Activated naive CD4-positive, alpha-beta T cell treated with anti-CD3 and anti-CD28 coated beads for 36 hours (primary cell): ENCODE measurements at regions of chr19 and their contacts with region 1.

Region 1: GRCh38 chr19:51158474-51159129 is 16.5 kb downstream of the SIGLEC7 start:
- DNase-seq: peak; percentile 91
- H3K4me3 Mint-ChIP-seq: no peak overlapping the region
- H3K27ac Mint-ChIP-seq: no peak overlapping the region
- H3K4me1 Mint-ChIP-seq: peaks cover 6% of the 10 kb centered on the region
- H3K27me3 Mint-ChIP-seq: no peaks in the 10 kb centered on the region

Region 2: DNA sequence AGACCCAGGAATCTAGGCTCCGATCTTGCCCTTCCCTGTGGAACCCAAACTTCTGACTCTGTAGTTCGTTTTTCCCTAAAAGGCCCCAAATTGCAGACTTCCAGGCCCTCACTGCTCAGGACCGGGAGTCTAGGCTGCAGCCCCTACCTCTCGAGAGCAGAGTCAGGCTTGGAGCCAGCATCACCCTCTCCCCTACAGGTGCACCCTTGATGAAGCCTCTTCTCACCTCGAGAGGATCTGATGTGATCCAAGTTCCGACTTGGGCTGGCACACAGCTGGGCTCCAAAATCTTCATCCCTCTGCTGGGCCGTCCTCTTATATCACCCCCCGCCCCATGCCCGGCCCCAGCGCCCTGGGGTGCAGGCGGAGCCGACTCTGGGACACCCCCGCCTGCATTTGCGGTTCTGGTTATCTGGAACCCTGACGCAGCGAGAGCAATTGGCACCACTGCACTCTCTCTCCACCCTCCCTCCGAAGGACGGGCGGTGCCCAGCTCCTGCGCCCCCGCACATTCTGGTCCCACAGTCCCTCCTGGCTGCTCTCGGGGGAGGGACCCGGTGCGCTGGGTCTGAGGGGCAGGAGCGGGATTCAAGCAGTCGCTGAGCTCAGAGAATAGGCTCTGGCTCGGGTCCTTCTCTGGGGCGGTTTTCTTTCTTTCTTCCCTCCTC is 174.8 kb before region 1 on chr19 and contains the start of gene KLK7:
- CTCF ChIA-PET with region 1: no interaction called
- intact Hi-C with region 1: no loop called
- DNase-seq: no peak
- H3K4me3 Mint-ChIP-seq: no peak within 1 kb of the TSS
- H3K27ac Mint-ChIP-seq: no peak within 1 kb of the TSS
- H3K4me1 Mint-ChIP-seq: no peaks in the 10 kb centered on the region
- H3K27me3 Mint-ChIP-seq: peaks cover 40% of the 10 kb centered on the region
- total RNA-seq, gene KLK7: not detected

Region 3: DNA sequence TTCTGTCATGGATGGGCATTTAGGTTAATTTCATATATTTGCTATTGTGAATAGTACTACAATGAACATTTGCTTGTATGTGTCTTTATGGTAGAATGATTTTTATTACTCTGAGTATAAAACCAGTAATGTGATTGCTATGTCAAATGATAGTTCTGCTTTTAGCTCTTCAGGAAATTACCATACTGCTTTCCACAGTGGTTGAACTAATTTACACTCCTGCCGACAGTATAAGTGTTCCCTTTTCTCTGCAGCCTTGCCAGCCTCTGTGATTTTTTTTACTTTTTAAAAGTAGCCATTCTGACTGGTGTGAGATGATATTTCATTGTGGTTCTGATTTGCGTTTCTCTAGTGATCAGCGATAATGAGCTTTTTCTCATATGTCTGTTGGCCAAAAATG is 10.0 kb before region 1 on chr19:
- CTCF ChIA-PET with region 1: interaction called, 11 read pairs
- intact Hi-C with region 1: no loop called
- DNase-seq: no peak
- H3K4me3 Mint-ChIP-seq: no peak overlapping the region
- H3K27ac Mint-ChIP-seq: no peak overlapping the region
- H3K4me1 Mint-ChIP-seq: peaks cover 3% of the 10 kb centered on the region
- H3K27me3 Mint-ChIP-seq: no peaks in the 10 kb centered on the region

Region 4: GRCh38 chr19:51259348-51260245 is 101.0 kb after region 1 on chr19:
- CTCF ChIA-PET with region 1: interaction called, 20 read pairs
- intact Hi-C with region 1: loop called (anchors 1 kb)
- DNase-seq: peak; percentile 65
- H3K4me3 Mint-ChIP-seq: no peak overlapping the region
- H3K27ac Mint-ChIP-seq: no peak overlapping the region
- H3K4me1 Mint-ChIP-seq: no peaks in the 10 kb centered on the region
- H3K27me3 Mint-ChIP-seq: peaks cover 26% of the 10 kb centered on the region

Region 5: GRCh38 chr19:51375504-51376221 is 217.1 kb after region 1 on chr19:
- CTCF ChIA-PET with region 1: no interaction called
- intact Hi-C with region 1: no loop called
- DNase-seq: peak; percentile 78
- H3K4me3 Mint-ChIP-seq: peak overlapping the region; percentile 24
- H3K27ac Mint-ChIP-seq: peak overlapping the region; percentile 46
- H3K4me1 Mint-ChIP-seq: peaks cover 65% of the 10 kb centered on the region
- H3K27me3 Mint-ChIP-seq: no peaks in the 10 kb centered on the region

Region 6: DNA sequence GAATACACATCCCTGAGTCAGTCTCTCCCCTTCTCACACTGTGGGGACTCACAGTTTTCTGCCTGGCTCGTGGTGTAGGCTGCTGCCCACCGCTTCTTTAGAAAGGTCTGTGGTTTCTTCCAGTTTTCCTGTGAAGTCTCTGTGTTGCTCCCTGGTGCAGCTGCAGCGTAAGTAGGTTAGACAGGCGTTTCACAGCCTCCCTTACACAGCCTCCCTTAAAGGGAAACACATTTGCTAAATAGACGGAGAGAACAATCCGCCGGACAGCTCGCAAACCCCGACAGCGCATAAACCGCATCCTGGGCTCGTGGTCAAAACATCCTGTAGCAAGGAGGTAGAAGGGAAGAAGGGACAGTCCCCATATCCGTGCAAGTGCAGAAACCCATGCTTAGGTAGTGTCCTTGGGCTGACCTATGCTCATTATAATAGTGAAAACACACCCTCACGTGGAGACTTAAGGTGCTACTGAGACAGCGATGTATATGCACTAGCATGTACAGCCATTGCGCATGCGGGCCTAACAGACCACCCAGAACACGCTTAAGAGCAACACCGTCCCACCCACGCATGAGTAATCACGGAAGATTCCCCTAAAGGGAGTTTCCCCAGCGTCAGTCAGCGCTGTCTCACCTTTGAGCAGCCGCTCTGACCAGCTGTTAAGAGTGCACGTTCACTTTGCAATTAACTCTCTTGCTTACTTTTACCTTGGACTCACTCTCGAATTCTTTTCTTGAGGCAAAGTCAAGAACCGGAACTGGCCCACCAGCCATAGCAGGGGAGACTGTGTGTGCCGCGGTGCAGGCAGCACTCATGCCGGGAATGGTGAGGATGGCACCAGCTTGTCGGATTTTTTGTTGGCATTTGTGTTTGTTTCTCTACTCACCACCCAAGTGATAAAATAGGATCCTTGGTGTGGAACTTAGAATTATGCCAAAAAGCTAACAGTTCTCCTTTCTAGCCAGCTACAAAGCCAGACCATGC is 283.1 kb after region 1 on chr19:
- CTCF ChIA-PET with region 1: no interaction called
- intact Hi-C with region 1: loop called (anchors 10 kb)
- DNase-seq: peak; percentile 95
- H3K4me3 Mint-ChIP-seq: peak overlapping the region; percentile 62
- H3K27ac Mint-ChIP-seq: peak overlapping the region; percentile 87
- H3K4me1 Mint-ChIP-seq: peaks cover 43% of the 10 kb centered on the region
- H3K27me3 Mint-ChIP-seq: peaks cover 4% of the 10 kb centered on the region